IMR-90 (cell line): ENCODE measurements at regions of chr15 and their contacts with region 1.

Region 1: GRCh38 chr15:92521624-92522008 is 127.9 kb downstream of the ST8SIA2 start:
- DNase-seq: peak; percentile 59
- ATAC-seq: peak; percentile 85
- H3K4me3 ChIP-seq: no peak overlapping the region
- H3K27ac ChIP-seq: no peak overlapping the region
- H3K4me1 ChIP-seq: no peaks in the 10 kb centered on the region
- H3K27me3 ChIP-seq: no peaks in the 10 kb centered on the region
- CTCF ChIP-seq: peak; percentile 43
- POLR2A ChIP-seq: no peak
- RAD21 ChIP-seq: peak; percentile 48

Region 2: DNA sequence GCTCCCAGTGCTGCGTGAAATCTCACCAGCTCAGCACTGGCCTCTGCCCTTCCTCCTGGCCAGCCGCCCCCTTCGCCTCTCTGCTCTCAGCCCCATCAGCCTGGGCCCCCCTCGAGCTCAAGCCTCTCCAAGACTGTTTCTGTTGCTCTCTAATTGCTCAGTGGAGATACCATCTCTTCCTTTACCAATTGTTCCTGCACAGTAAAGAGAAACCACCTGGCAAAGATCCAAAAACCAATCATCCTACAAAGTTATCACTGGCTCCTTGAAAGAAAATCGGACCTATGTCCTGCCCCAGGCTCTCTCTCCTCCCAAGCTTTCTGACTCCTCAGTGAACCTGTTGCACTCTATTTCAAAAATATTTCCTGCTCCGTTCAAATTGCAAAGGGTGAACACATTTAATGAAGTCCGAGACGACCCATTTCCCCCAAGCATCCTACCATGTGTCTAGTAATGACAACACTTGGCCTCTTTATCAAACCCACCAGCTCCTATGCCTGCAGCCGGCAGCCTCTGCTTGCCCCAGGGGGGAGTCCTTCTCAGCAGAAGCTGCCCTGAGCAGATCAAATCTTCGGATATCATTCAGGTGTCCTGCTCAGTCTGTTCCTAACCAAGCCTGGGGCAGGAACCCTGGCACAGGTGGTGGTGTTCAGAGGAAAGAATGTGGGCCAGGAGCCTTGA is 187.6 kb after region 1 on chr15:
- CTCF ChIA-PET with region 1: interaction called, 10 read pairs
- POLR2A ChIA-PET with region 1: no interaction called
- dilution Hi-C with region 1: no loop called
- in situ Hi-C with region 1: loop called (anchors 5 kb)
- intact Hi-C with region 1: loop called (anchors 1 kb)
- DNase-seq: no peak
- ATAC-seq: no peak
- H3K4me3 ChIP-seq: no peak overlapping the region
- H3K27ac ChIP-seq: no peak overlapping the region
- H3K4me1 ChIP-seq: no peaks in the 10 kb centered on the region; the same call in 1 of the 2 replicates
- H3K27me3 ChIP-seq: no peaks in the 10 kb centered on the region; the same call in 1 of the 2 replicates
- CTCF ChIP-seq: no peak
- POLR2A ChIP-seq: no peak
- RAD21 ChIP-seq: no peak